HEK293T (cell line): ENCODE measurements at regions of chr2 and their contacts with region 1.

Region 1: DNA sequence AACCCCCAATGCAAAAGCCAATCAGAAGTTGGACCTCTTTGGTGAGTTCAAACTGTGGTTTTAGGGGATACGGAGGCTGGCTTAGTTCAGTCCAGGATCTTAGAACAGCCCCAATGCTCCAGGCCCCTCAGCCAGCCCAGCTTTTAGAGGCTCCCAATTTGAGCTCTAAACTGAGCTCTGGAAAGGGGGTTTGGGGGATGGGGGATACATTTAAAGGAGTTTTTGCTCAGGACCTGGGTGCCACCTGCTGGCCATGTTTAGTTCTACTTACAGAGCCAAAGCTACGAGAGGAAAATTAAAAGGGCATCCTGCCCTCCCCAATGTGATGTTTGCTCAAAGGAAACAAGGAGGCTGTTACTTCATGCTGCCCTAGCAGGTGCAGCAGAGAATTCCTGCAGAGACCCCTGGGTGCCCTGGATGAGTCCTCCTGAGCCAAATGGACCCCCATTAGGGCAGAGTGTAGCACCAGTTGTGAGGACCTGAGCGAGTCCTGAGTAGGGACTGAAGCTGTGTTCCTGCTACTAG is 15.9 kb upstream of the TMEM214 start:
- DNase-seq: peak; percentile 64

Region 2: GRCh38 chr2:26792720-26793119 is 224.1 kb before region 1 on chr2:
- CTCF ChIA-PET with region 1: interaction called, 11 read pairs
- POLR2A ChIA-PET with region 1: no interaction called
- DNase-seq: no peak

Region 3: GRCh38 chr2:26846328-26847306 is 170.2 kb before region 1 on chr2:
- CTCF ChIA-PET with region 1: interaction called, 16 read pairs
- POLR2A ChIA-PET with region 1: no interaction called
- DNase-seq: peak; percentile 80

Region 4: DNA sequence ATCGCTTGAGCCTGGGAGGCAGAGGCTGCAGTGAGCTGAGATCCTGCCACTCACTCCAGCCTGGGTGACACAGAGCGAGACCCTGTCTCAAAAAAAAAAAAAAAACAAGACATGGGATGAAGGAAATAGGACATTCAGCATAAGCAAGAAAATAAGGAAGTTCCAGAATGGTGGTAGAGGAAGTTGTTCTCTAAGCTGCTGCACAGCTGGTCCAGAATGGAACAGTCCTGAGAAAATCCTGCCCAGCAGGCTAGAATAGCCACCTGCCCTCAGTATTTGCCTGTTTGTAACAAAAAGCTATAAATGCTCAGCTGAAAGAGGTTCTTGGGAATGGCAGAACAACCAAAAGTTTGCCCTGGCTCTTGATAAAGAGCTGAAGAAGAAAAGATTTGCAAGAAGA is 57.5 kb before region 1 on chr2:
- CTCF ChIA-PET with region 1: interaction called, 153 read pairs
- POLR2A ChIA-PET with region 1: interaction called, 16 read pairs
- DNase-seq: no peak

Region 5: GRCh38 chr2:26971911-26972786 is 44.7 kb before region 1 on chr2:
- CTCF ChIA-PET with region 1: interaction called, 13 read pairs
- POLR2A ChIA-PET with region 1: interaction called, 3 read pairs
- DNase-seq: no peak

Region 6: DNA sequence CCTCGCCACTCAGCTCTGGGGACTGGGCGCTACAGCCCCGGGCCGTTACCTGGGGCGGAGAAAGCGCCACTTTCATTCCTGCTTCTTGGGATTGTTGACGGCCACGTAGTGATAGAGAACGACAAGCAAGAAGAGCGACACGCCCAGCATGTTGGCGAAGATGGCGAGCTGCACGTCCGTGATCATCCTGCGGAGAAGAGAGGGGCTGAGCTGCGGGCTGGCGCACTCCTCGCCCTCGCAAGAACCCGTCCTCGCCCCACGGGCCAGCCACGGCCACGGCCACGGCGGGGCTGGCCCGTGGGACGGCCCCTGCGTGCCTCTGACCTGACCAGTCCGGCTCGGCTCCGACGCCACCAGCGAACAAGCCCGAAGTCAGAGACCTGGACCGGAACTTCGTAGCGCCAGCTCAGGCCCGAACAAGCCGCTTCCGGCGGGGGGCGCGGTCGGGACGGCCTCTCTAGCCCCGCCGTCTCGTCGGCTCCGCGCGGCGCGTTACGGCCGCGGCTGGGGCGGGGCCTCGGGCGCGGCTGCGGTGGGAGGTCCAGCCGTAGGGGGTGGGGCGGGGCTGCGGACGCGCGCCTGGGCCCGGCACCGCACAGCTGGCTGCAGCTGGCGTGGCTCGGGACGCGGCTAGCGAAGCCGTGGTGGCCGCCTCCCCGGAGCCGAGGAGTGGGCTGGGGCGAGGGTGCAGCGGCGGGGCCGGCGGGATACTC is 54.6 kb after region 1 on chr2 and contains the start of gene OST4:
- CTCF ChIA-PET with region 1: no interaction called
- POLR2A ChIA-PET with region 1: no interaction called
- DNase-seq: peak; percentile 96